PC-3 (cell line): ENCODE measurements at regions of chr5 and their contacts with region 1.

Region 1: GRCh38 chr5:142108432-142109330 is at the start of gene NDFIP1:
- DNase-seq: peak; percentile 77
- ATAC-seq: peak; percentile 94
- H3K4me3 ChIP-seq: peak within 1 kb of the TSS; percentile 96
- H3K27ac ChIP-seq: peak within 1 kb of the TSS; percentile 35
- H3K4me1 ChIP-seq: peaks cover 11% of the 10 kb centered on the region
- H3K27me3 ChIP-seq: no peaks in the 10 kb centered on the region
- CTCF ChIP-seq: no peak
- total RNA-seq, gene NDFIP1: 33.5 and 38.2 TPM in 2 replicates

Region 2: GRCh38 chr5:142059294-142059940 is 49.3 kb before region 1 on chr5:
- CTCF ChIA-PET with region 1: no interaction called
- POLR2A ChIA-PET with region 1: no interaction called
- intact Hi-C with region 1: loop called (anchors 5 kb)
- DNase-seq: peak; percentile 48
- ATAC-seq: no peak
- H3K4me3 ChIP-seq: no peak overlapping the region
- H3K27ac ChIP-seq: peak overlapping the region; percentile 94; the same call in 1 of the 2 replicates
- H3K4me1 ChIP-seq: peaks cover 27% of the 10 kb centered on the region
- H3K27me3 ChIP-seq: no peaks in the 10 kb centered on the region
- CTCF ChIP-seq: no peak; the same call in 1 of the 2 replicates

Region 3: GRCh38 chr5:142120247-142120935 is 11.7 kb after region 1 on chr5:
- CTCF ChIA-PET with region 1: no interaction called
- POLR2A ChIA-PET with region 1: no interaction called
- intact Hi-C with region 1: loop called (anchors 1 kb)
- DNase-seq: peak; percentile 29
- ATAC-seq: peak; percentile 49
- H3K4me3 ChIP-seq: no peak overlapping the region
- H3K27ac ChIP-seq: peak overlapping the region; percentile 26
- H3K4me1 ChIP-seq: peaks cover 37% of the 10 kb centered on the region
- H3K27me3 ChIP-seq: no peaks in the 10 kb centered on the region
- CTCF ChIP-seq: no peak

Region 4: GRCh38 chr5:142145106-142145900 is 36.6 kb after region 1 on chr5:
- CTCF ChIA-PET with region 1: interaction called, 3 read pairs
- POLR2A ChIA-PET with region 1: no interaction called
- intact Hi-C with region 1: loop called (anchors 5 kb)
- DNase-seq: peak; percentile 74
- ATAC-seq: peak; percentile 91
- H3K4me3 ChIP-seq: no peak overlapping the region
- H3K27ac ChIP-seq: no peak overlapping the region
- H3K4me1 ChIP-seq: no peaks in the 10 kb centered on the region
- H3K27me3 ChIP-seq: no peaks in the 10 kb centered on the region
- CTCF ChIP-seq: peak; percentile 81